ENCODE measurements at regions of chrX and their contacts with region 1.

Region 1: DNA sequence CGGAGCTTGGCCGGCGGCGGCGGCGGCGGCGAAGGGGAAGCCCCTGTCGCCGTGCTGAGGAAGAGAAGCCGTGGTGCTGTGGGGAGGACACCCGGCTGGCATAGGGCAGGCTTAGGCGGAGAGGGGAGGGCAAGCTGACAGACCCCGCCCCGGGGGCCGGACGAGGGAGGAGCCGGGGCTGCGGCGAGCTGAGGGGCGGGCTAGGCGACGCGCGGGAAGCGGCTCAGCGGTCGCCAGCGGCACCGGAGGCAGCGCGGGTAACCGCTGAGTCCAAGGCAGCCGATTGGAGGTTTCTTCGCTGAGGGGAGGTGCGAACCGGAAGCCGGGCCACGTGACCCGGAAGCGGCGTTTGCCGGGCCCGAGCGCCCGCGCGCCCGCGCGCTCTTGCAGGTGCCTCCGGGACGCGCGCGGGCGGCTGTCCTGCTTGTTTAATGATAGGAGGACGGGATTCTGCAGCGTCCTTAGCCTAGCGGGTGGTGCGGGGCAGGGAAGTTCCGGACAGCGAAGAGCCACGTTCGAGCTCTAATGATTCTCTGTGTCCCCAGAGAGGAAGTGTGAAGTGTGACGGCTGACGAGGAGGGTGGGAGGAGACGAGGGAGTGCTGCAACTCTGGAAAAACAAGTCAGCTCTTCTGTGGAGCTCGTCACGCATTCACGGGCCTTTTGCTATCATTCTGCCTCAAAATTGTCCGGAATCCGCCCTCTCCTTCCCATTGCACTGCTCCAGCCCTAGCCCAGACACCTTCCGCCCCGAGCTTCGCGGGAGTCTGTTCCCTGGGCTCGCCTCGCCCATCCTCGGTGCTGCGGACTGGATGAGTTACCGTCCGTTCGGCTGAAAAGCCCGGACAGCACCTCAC is at the start of gene AP1S2:
- DNase-seq: peak; percentile 92
- H3K4me3 Mint-ChIP-seq: peak within 1 kb of the TSS; percentile 87
- H3K27ac Mint-ChIP-seq: peak within 1 kb of the TSS; percentile 85
- H3K4me1 Mint-ChIP-seq: peaks cover 22% of the 10 kb centered on the region
- H3K27me3 Mint-ChIP-seq: no peaks in the 10 kb centered on the region
- total RNA-seq, gene AP1S2: 29.5 to 34.3 TPM

Region 2: DNA sequence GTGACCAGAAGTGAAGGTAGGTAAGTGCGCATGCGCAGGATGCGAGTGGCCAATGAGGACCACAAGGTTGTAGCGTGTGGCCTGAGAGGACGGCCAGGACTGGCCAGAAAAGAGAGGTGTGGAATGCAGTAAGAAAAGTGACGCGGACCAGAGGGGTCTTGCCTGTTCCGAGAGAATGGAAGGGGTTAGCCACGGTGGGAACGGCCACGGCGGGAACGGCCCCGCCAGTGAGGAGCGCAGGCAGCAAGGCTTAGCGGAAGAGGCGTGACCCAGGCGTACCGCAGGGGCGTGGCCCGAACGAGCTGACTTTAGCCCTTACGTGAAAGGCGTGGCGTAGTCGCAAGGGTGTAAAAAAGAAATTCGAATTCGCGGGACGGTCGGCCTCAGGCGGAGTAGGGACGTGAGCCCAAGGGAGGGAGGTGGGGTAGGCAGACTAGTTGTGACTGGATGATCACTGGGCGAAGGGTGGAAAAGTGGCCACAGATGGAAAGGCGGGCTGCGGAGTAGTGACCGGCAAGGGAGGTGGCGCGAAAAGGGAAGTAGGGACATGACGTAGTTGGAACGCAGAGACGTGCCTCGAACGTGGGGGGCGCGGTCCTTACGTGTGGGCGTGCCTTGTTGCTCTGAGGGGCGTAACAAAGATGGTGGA is 180.0 kb before region 1 on chrX:
- CTCF ChIA-PET with region 1: no interaction called
- POLR2A ChIA-PET with region 1: interaction called, 27 read pairs
- DNase-seq: peak; percentile 85
- H3K4me3 Mint-ChIP-seq: no peak overlapping the region
- H3K27ac Mint-ChIP-seq: no peak overlapping the region
- H3K4me1 Mint-ChIP-seq: peaks cover 33% of the 10 kb centered on the region
- H3K27me3 Mint-ChIP-seq: peaks cover 3% of the 10 kb centered on the region

Region 3: DNA sequence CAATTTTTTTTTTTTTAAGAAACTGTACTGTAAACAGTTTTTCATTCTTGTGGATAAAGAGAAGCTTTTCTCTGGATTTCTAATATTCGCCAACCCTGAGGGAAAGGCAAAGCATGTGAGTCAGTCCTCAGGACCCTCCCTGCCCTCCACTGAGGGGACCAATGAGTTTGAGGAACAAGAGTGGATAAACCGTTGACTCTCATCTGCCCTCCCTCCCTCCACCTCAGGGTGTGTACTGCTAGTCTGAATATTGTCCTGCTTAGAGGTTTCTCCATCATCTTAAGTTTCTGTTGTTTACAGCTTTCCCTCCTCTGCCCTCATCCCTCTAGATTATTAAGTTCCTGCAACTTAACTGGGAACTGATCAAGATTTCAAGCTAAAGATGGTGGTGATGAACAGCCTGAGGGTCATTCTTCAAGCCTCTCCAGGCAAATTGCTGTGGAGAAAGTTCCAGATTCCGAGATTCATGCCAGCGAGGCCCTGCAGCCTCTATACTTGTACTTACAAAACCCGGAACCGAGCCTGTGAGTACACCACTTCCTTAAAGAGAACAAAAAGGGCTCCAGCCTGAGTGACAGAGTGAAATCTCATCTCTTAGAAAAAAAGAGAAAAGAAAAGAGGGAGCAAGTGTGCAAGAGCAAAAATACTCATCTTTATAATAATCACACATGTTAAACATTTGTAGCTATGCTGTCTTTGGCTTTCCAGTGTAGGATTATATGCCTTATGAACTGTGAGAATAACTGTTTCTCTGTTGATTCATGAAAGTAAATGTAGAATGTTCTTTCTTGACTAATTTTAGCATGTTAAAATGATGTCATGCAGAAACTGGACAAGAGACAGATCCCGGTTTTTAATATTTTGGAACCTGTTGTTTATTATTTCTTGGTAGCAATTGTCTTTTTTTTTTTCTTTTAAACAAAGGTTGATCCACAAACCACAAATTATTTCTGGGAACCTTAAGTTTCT is 105.0 kb before region 1 on chrX:
- CTCF ChIA-PET with region 1: no interaction called
- POLR2A ChIA-PET with region 1: interaction called, 10 read pairs
- DNase-seq: peak; percentile 39
- H3K4me3 Mint-ChIP-seq: peak overlapping the region; percentile 66
- H3K27ac Mint-ChIP-seq: peak overlapping the region; percentile 99
- H3K4me1 Mint-ChIP-seq: peaks cover 68% of the 10 kb centered on the region
- H3K27me3 Mint-ChIP-seq: no peaks in the 10 kb centered on the region

Region 4: DNA sequence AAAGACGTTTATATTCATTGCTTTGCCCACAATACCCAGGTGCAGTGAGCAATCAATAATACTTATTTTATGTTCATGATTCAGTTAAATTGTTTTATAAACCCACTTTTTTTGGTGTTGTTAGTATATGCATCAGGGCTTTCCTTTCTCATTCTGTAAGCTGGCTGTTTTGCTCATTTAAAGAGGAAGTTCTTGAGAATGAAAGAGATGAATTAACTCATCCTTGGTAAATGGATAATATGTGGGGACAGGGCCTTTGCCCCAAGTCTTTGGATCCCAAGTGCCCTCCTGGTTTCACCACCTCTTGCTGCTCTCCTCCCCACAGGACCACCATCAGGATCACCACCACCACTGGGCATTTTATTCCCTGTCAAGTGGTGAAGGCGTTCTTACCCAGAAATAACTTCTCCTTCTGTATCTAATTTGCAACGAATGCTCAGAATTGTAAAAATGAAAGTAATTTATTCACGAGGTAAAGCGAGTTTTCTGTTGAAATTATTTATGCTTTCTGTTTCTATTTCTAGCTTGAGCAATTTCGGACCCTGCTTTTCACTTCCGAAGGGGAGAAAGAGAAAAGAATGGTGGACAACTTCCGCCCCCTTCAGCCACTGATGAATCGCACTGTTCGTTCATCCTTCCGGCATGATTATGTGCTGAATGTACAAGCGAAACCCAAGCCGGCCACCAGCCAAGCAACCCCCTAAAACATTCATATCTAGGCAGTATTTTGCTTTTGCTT is 72.8 kb before region 1 on chrX:
- CTCF ChIA-PET with region 1: no interaction called
- POLR2A ChIA-PET with region 1: interaction called, 11 read pairs
- DNase-seq: peak; percentile 43
- H3K4me3 Mint-ChIP-seq: peak overlapping the region; percentile 81
- H3K27ac Mint-ChIP-seq: peak overlapping the region; percentile 99
- H3K4me1 Mint-ChIP-seq: peaks cover 14% of the 10 kb centered on the region
- H3K27me3 Mint-ChIP-seq: no peaks in the 10 kb centered on the region